Psoas muscle (tissue), 8 donors: ENCODE measurements at regions of chr17 and their contacts with region 1.

Region 1: DNA sequence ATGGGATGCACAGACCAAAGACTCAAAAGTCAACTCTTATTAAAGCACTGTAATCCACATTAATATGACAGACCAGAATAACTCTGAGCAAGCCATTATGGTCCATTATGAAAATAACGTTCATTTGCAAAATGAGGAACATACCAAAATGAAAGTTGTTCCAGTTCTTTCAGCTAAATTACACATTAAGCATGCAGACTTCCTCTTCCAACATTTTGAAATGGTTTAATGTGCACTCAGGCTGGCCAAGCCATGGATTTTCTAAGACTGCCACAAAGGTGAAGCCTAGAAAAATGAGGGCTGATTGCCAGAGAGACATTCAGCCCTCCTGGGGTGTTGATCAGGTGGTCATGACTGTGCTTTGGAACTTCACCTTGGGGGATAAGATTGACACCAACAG is 56.7 kb upstream of the NOG start:
- DNase-seq: no peak
- ATAC-seq: no peak
- H3K4me3 ChIP-seq: no peak overlapping the region
- H3K27ac ChIP-seq: no peak overlapping the region
- H3K4me1 ChIP-seq: no peaks in the 10 kb centered on the region
- H3K27me3 ChIP-seq: no peaks in the 10 kb centered on the region
- CTCF ChIP-seq: no peak

Region 2: DNA sequence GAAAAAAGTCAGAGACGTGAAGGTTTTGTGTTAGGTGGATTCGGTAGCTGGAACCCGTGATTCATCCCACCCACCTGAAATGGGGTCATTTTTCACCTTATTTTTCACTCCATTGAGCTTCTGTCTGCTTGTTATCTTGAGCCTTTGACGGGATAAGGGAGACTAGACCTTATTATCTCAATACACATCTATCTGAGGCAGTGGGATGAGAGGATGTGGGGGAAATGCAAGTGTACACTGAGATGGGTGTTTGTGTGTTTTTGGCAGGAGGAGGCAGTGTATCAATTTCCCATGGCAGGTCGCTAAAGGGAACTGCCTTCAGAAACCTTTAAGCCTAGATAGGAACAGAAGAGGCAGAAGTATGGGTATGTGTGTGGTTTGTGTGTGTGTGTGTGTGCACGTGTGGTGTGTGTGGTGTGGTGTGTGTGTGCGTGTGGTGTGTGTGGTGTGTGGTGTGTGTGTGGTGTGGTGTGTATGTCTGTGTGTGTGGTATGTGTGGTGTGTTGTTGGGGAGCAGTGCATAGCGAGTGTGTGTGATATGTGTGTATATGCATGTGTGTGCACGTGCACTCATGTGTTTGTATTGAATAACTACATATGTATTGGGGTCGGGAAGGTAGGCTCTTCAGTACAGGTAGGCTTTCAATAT is 50.7 kb after region 1 on chr17:
- intact Hi-C with region 1: loop called in 1 of 2 experiments (anchors 5 kb)
- DNase-seq: no peak
- ATAC-seq: no peak
- H3K4me3 ChIP-seq: no peak overlapping the region
- H3K27ac ChIP-seq: no peak overlapping the region
- H3K4me1 ChIP-seq: no peaks in the 10 kb centered on the region
- H3K27me3 ChIP-seq: peaks cover 0 to 6% (median 0%) of the 10 kb centered on the region in 3 donors
- CTCF ChIP-seq: no peak

Region 3: GRCh38 chr17:56661916-56662315 is 125.2 kb after region 1 on chr17:
- intact Hi-C with region 1: no loop called
- DNase-seq: no peak
- ATAC-seq: no peak
- H3K4me3 ChIP-seq: no peak overlapping the region
- H3K27ac ChIP-seq: no peak overlapping the region
- H3K4me1 ChIP-seq: peaks cover 8% of the 10 kb centered on the region
- H3K27me3 ChIP-seq: no peaks in the 10 kb centered on the region
- CTCF ChIP-seq: no peak